Common myeloid progenitor, CD34-positive (primary cell): ENCODE measurements at regions of chr1 and their contacts with region 1.

Region 1: DNA sequence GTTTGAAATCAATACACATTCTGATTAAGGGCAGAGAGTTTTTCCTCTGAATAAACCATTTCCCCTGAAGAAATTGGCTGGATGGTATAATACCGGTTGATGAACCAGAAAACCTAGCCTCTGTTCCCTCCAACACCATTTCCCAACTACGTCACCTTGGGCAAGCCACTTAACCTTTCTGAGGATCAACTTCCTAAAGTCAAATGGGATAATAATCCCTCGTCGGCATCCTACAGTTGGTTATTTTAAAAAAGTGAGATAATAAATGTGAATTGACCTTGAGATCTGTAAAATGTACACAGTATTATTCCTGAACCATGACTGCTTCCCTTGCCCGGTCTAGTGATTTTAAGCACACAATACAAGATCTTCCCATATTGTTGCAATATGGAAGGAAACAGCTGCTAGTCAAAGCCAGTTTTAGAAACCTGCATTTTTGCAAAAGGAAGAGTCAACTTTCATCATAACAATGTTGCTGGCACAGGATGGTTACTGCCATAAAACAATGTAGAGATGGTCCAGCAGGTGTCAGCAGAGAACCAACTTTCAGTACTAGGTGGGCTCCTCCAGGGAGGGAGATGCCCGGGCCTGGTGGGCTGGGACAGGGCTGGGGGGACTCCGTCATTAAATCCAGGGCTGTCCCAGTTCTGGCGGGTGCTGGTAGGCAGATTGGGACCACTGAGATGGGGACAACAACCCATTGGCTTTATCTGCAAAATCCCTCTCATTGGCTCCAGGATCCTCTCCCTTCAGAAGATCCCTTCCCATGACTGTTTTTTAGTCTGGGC is 5.2 kb upstream of the HLX start:
- DNase-seq: peak; percentile 66 to 84 (median 80)
- H3K4me3 ChIP-seq: no peak overlapping the region
- H3K27ac ChIP-seq: no peak overlapping the region
- H3K4me1 ChIP-seq: peaks cover 14 to 36% (median 35%) of the 10 kb centered on the region in 4 experiments
- H3K27me3 ChIP-seq: no peaks in the 10 kb centered on the region

Region 2: GRCh38 chr1:220891224-220892085 is 17.4 kb after region 1 on chr1:
- CTCF ChIA-PET with region 1: interaction called, 15 read pairs
- POLR2A ChIA-PET with region 1: interaction called, 3 read pairs
- DNase-seq: peak in 1 of 3 donors; percentile 29
- H3K4me3 ChIP-seq: peak overlapping the region in 4 of 7 experiments; percentile 8 to 49 (median 39)
- H3K27ac ChIP-seq: no peak overlapping the region
- H3K4me1 ChIP-seq: peaks cover 3 to 44% (median 30%) of the 10 kb centered on the region in 4 experiments
- H3K27me3 ChIP-seq: peaks cover 8 to 90% (median 63%) of the 10 kb centered on the region in 5 experiments

Region 3: DNA sequence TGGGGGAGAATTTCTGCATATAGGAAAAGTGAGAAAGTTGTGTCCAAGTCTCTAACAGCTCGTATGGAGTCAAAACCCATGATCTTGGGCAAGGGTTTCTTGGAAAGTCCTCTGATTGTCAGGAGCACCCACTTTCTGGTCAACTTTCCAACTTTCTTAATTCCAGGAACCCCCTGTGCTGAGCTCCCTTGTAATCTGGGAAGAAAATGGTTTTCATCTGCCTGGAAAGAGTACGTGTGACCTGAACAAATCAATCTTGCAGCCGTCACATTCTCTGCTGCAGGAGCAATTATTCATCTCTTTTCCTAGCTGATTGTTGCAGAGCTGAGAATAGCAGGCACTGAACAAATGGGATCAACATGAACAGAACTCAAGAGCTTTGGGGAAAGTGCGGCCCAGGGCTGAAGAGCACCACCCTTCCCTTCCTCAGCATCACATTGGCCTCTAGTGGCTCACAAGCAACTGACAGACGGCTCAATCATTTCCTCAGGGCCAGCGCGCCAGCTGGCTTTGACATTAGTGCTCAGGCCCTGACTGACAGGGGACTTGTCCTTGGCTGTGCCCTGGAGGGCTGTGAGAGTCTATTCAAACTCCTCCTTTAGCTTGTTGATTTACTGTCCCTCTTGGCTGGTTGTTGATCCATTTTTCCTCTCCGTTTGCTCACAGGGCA is 300.4 kb after region 1 on chr1:
- CTCF ChIA-PET with region 1: interaction called, 10 read pairs
- POLR2A ChIA-PET with region 1: no interaction called
- DNase-seq: peak in 2 of 3 donors; percentile 31 to 42
- H3K4me3 ChIP-seq: no peak overlapping the region
- H3K27ac ChIP-seq: no peak overlapping the region
- H3K4me1 ChIP-seq: peaks cover 0 to 27% (median 9%) of the 10 kb centered on the region in 4 experiments
- H3K27me3 ChIP-seq: no peaks in the 10 kb centered on the region

Region 4: DNA sequence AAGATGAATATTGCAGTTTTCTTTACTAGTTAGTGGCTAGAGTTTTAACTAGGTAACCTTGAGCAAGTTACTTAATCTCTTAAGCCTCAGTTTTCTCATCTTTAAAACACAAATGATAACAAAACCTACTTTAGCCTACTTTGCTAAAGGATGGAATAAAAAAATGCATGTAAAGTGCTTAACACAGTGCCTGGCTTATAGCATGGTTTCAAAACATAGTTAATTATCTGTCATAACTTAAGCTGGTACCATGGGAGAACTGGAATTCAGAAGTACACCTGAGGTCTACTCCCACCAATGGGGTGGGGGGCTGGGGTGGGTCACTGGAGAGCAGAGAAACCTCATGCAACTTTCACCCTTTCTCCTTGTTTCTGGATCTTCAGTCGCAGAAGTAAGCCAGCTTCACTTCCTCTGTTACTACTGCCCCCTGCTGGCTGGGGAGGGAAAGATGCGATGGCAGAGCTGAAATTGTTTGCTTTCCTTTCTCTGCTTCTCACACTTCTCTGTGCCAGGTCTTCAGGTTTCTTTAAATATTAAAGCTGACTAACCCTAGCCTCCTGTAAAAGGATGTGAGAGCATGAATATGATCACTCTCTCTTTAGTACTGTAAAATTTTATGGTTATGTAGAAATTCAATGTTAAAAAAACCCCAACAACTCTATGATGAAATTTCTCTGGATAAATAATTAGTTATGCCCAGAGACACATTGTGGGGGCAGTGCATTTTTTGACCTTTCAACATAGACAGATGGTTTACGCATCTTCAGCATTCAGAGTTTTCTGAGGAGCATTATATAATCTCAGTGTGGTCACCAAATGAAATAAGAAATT is 329.4 kb after region 1 on chr1:
- CTCF ChIA-PET with region 1: interaction called, 61 read pairs
- POLR2A ChIA-PET with region 1: no interaction called
- DNase-seq: peak; percentile 73 to 85 (median 78)
- H3K4me3 ChIP-seq: no peak overlapping the region
- H3K27ac ChIP-seq: no peak overlapping the region
- H3K4me1 ChIP-seq: no peaks in the 10 kb centered on the region
- H3K27me3 ChIP-seq: no peaks in the 10 kb centered on the region

Region 5: DNA sequence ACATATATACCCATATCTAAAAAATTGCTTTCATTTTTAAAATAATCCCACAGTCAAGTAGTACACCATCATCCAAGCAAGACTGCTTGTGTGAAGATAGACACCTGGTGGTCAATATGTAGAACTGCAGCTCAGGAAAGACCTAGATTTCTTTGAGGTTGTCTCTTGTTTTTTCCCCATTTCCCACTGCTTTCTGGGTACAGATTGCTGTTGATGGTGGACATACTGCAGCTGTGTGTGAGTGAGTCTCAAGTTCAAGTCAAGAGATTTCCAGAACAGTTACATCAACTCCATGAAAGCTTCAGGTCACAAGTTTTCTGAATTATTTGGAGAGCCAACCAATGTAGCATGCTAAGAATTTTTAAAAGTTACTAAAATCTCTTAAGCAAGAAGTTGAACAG is 561.4 kb after region 1 on chr1:
- CTCF ChIA-PET with region 1: interaction called, 41 read pairs
- POLR2A ChIA-PET with region 1: no interaction called
- DNase-seq: peak; percentile 59 to 79 (median 73)
- H3K4me3 ChIP-seq: no peak overlapping the region
- H3K27ac ChIP-seq: no peak overlapping the region
- H3K4me1 ChIP-seq: peaks cover 0 to 17% (median 4%) of the 10 kb centered on the region in 4 experiments
- H3K27me3 ChIP-seq: no peaks in the 10 kb centered on the region